ENCODE measurements at regions of chr20 and their contacts with region 1.

Region 1: GRCh38 chr20:47985092-47985850 is 200.0 kb upstream of the SULF2 start:
- DNase-seq: peak; percentile 81 to 89
- H3K4me3 ChIP-seq: peak overlapping the region; percentile 16; the same call in 1 of the 2 replicates
- H3K27ac ChIP-seq: peak overlapping the region; percentile 98
- H3K4me1 ChIP-seq: peaks cover 80% of the 10 kb centered on the region
- H3K27me3 ChIP-seq: no peaks in the 10 kb centered on the region
- CTCF ChIP-seq: no peak

Region 2: GRCh38 chr20:47792021-47792618 is 193.2 kb before region 1 on chr20:
- CTCF ChIA-PET with region 1: interaction called, 5 read pairs
- POLR2A ChIA-PET with region 1: interaction called, 15 read pairs
- intact Hi-C with region 1: no loop called
- DNase-seq: peak; percentile 77 to 95
- H3K4me3 ChIP-seq: peak overlapping the region; percentile 54
- H3K27ac ChIP-seq: peak overlapping the region; percentile 95
- H3K4me1 ChIP-seq: peaks cover 90% of the 10 kb centered on the region
- H3K27me3 ChIP-seq: no peaks in the 10 kb centered on the region
- CTCF ChIP-seq: no peak

Region 3: DNA sequence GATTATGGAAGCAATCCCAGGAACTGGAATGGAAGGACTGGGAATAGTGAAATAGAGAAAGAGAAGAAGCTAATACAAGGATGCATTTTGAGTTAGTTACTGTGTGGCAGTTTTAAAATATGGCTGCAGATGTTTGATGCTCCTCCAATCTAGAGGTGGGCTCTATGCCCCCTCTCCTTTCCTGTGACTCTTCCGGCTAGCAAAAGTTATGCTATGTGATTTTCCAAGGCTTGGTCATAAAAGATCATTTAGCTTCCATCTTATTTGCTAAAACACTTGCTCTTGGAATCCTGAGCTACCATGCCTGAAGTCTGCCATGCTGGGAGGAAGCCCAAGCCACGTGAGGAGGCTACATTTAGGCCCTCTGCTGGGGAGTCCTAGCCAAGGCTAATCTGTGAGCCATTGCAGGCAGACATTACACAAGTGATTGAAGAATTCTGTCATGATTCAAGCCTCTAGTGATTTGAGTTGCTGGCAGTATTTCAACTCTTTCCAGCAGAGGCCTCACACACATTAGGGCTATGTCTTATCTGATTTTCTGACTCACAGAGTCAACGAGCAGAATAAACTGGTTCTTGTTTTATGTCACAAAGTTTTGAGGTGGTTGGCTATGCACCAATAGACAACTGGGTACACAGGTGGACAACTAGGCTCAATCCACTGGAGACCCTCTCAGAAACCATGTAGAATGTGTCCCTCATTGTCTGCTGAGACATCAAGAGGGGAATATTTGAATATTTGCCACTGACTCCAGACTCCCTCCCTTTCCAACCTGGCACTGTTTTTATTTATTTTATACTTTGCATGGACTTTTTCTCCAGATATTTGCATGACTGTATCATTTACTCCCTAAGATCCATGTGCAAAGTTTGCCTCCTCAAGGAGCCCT is 27.2 kb after region 1 on chr20:
- CTCF ChIA-PET with region 1: interaction called, 4 read pairs
- POLR2A ChIA-PET with region 1: no interaction called
- intact Hi-C with region 1: loop called (anchors 1 kb)
- DNase-seq: peak; percentile 65 to 97
- H3K4me3 ChIP-seq: no peak overlapping the region
- H3K27ac ChIP-seq: peak overlapping the region; percentile 44
- H3K4me1 ChIP-seq: peaks cover 13% of the 10 kb centered on the region
- H3K27me3 ChIP-seq: no peaks in the 10 kb centered on the region
- CTCF ChIP-seq: peak; percentile 68

Region 4: GRCh38 chr20:48025031-48025515 is 39.8 kb after region 1 on chr20:
- CTCF ChIA-PET with region 1: no interaction called
- POLR2A ChIA-PET with region 1: no interaction called
- intact Hi-C with region 1: loop called (anchors 2 kb)
- DNase-seq: peak; percentile 85 to 88
- H3K4me3 ChIP-seq: peak overlapping the region; percentile 72
- H3K27ac ChIP-seq: peak overlapping the region; percentile 94
- H3K4me1 ChIP-seq: peaks cover 35% of the 10 kb centered on the region
- H3K27me3 ChIP-seq: no peaks in the 10 kb centered on the region
- CTCF ChIP-seq: no peak

Region 5: DNA sequence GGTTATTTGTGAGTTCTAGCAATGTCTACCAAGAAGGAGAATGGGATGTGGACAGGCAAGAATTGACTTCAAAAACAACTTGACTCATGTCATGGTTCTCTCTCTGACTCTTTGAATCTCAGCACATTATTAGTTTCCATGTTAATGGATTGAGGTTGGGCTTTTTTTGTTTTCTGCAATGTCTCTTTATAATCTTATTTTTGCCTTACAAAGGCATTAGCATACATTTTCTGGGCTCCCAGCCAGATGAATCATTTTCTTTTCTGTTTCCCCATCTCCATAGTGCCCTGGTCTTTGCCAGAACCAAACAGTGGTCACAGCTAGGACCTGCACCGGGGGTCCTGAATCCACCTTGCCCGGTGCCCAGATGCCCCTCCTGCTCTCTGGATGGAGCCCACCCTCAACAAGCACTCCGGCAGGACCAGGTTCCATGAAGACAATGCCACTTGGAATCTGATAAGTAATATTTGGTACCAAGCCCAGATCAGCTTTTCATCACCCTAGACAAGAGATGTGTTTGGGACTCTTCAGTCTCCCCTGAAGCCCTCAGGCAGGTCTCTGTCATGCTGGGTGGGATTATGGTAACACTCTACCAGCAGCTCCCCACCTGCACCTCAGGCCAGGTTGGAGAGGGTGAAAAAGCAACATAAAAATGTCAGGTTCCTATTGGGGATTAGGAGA is 66.7 kb after region 1 on chr20:
- CTCF ChIA-PET with region 1: interaction called, 3 read pairs
- POLR2A ChIA-PET with region 1: no interaction called
- intact Hi-C with region 1: loop called (anchors 5 kb)
- DNase-seq: peak; percentile 78 to 87
- H3K4me3 ChIP-seq: no peak overlapping the region
- H3K27ac ChIP-seq: peak overlapping the region; percentile 52
- H3K4me1 ChIP-seq: peaks cover 22% of the 10 kb centered on the region
- H3K27me3 ChIP-seq: no peaks in the 10 kb centered on the region
- CTCF ChIP-seq: no peak

Region 6: DNA sequence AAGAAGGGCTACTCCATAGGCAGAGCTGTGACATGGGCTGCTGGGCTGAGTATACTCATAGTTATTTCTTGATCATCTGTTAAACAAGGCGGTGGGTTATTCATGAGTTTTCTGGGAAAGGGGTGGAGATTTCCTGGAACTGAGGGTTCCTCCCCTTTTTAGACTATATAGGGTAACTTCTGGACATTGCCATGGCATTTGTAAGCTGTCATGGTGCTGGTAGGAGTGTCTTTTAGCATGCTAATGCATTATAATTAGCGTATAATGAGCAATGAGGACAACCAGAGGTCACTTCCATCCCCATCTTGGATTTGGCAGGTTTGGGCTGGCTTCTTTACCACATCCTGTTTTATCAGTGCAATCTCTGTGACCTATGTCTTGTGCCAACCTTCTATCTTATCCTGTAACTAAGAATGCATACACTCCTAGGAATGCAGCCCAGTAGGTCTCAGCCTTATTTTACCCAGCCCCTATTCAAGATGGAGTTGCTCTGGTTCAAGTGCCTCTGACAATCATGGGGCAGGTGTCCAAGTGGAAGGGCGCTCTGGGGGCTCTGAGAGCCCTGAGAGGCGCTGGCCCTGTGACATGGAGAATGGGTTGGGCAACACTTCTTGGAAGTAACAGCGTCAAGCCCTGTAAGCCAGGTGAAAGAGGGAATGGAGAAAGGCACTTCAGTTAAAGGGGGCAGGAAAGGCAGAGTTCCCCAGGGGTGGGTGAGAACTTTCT is 154.2 kb after region 1 on chr20:
- CTCF ChIA-PET with region 1: no interaction called
- POLR2A ChIA-PET with region 1: no interaction called
- intact Hi-C with region 1: loop called (anchors 1 kb)
- DNase-seq: peak; percentile 79 to 88
- H3K4me3 ChIP-seq: no peak overlapping the region
- H3K27ac ChIP-seq: peak overlapping the region; percentile 45
- H3K4me1 ChIP-seq: peaks cover 23% of the 10 kb centered on the region
- H3K27me3 ChIP-seq: no peaks in the 10 kb centered on the region
- CTCF ChIP-seq: no peak

Region 7: GRCh38 chr20:48180184-48180957 is 195.1 kb after region 1 on chr20:
- CTCF ChIA-PET with region 1: no interaction called
- POLR2A ChIA-PET with region 1: no interaction called
- intact Hi-C with region 1: loop called (anchors 1 kb)
- DNase-seq: peak; percentile 50 to 91
- H3K4me3 ChIP-seq: peak overlapping the region; percentile 2; the same call in 1 of the 2 replicates
- H3K27ac ChIP-seq: peak overlapping the region; percentile 84
- H3K4me1 ChIP-seq: peaks cover 45% of the 10 kb centered on the region
- H3K27me3 ChIP-seq: no peaks in the 10 kb centered on the region
- CTCF ChIP-seq: no peak